ENCODE measurements at regions of chr19 and their contacts with region 1.

Region 1: DNA sequence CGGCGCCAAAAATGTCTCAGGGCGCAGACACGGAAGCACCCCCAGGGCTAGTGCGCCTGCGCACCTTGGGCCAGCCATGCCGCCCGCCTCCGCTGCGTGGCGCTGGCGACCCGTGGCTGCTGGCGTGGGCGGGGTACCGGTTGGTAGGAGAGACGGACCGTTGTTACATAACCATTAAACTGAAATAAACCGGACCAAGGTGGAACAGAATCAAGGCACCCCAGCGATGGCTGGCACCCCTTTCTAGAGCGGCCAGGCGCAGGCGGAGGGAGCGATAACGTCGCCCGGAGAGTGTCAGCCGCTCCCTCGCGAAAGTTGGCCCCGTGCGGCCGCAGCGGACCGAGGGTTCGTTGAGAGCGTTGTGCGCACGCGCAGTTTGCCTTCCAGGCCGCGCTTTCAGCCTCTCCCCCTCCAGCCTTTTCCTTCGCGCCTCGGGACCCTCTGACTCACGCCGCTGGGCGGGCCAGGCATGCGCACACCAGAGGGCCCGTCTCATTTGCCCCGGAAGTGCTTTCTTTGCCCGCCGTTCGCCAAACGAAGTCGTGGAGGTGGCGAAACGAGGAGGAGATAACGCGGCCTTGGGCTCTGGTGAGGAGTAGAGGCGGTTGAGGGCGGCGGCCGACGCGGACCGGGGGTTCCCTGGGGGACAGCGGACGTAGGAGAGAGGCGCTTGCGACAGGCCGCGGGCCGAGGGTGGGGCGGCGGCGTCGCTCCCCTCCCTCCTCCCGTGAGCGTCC is at the starts of genes PLEKHJ1 and SF3A2:
- DNase-seq: peak; percentile 98 to 100 (median 99)
- H3K4me3 ChIP-seq: peak within 1 kb of the TSS; percentile 38 to 88
- H3K4me3 Mint-ChIP-seq: peak within 1 kb of the TSS; percentile 95 to 100 (median 98)
- H3K27ac ChIP-seq: peak within 1 kb of the TSS; percentile 98
- H3K27ac Mint-ChIP-seq: peak within 1 kb of the TSS; percentile 97 to 100 (median 99)
- H3K4me1 ChIP-seq: peaks cover 62% of the 10 kb centered on the region
- H3K4me1 Mint-ChIP-seq: peaks cover 39 to 67% (median 54%) of the 10 kb centered on the region in 4 donors
- H3K27me3 ChIP-seq: no peaks in the 10 kb centered on the region
- H3K27me3 Mint-ChIP-seq: peaks cover 2 to 5% of the 10 kb centered on the region in 2 donors
- total RNA-seq, gene PLEKHJ1: 64.9 to 65.3 TPM
- total RNA-seq, gene SF3A2: 140 to 141 TPM

Region 2: DNA sequence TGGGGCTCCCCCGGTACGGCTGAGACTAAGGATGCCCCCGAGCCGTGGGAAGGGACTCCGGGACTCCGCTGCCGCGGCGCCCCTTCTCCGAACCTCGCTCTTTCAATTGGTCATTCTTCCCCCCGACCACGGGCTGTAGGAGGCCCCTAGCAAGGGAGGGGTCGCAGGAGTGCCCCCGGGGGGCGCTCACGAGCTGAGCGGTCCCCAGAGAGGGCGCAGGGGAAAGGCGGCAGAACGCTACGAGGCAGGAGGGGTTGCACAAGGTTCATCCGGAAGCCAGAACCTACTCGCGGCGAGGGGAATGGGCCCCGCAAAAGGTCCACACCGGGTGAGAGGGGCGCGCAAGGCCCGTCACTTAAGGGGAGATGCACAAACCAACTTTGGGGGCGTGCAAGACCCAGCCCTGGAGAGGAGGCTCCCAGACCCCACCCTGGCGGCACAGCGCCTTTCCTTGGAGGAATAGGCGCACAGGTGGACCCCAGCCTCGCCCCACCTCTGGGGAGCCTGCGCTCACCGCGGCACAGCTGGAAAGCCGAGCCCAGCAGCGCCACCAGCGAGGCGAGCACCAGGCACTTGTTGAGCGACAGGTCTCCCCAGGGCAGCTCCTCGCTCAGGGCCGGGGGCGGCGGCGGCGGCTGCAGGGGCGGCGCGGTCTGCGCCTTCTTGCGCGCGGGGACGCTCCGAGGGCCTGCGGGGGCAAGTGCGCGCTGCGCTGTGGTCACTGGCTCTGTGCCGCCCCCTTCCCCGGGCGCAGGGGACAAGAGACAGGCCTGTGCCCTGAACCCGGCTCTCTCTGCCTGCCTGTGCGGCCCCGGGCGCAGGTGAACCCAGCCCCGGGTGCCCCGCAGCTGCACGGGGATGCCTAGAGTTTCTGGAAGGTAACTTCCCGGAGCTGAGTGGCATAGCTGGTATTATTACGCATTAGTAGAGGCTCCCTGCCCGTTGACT is 16.9 kb after region 1 on chr19:
- CTCF ChIA-PET with region 1: interaction called, 75 read pairs
- POLR2A ChIA-PET with region 1: interaction called, 325 read pairs
- intact Hi-C with region 1: loop called (anchors 1 kb)
- DNase-seq: peak; percentile 55 to 61 (median 57)
- H3K4me3 ChIP-seq: peak overlapping the region in 1 of 2 donors; percentile 52
- H3K4me3 Mint-ChIP-seq: peak overlapping the region; percentile 63 to 84 (median 79)
- H3K27ac ChIP-seq: no peak overlapping the region
- H3K27ac Mint-ChIP-seq: peak overlapping the region in 5 of 7 donors; percentile 23 to 68 (median 43)
- H3K4me1 ChIP-seq: peaks cover 47% of the 10 kb centered on the region
- H3K4me1 Mint-ChIP-seq: peaks cover 5 to 25% (median 15%) of the 10 kb centered on the region in 4 donors
- H3K27me3 ChIP-seq: peaks cover 4% of the 10 kb centered on the region
- H3K27me3 Mint-ChIP-seq: no peaks in the 10 kb centered on the region

Region 3: DNA sequence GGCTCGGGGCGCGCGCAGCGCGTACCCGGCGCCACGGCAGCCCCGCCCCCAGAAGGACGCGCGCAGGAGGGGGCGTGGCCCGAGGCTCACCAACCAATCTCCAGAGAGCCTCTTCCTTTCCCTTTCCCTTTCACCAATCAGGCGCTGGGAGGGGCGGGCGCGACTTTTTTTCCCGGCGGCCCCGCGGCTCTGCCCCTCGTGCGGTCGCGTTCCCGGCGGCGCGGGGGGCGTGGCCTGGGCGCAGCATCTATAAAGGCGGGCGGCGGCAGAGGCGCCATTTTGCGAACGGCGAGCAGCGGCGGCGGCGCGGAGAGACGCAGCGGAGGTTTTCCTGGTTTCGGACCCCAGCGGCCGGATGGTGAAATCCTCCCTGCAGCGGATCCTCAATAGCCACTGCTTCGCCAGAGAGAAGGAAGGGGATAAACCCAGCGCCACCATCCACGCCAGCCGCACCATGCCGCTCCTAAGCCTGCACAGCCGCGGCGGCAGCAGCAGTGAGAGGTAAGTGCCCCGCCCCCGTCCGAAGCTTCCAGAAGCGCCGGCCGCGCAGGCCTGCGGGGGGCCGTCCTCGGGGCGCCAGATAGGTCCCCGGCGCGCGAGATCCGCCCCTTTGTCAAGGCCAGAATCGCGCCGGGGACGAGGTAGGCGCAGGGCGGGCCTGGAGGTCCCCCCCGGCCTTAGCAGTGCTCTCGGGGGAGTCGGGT is 32.9 kb after region 1 on chr19:
- CTCF ChIA-PET with region 1: interaction called, 67 read pairs
- POLR2A ChIA-PET with region 1: interaction called, 251 read pairs
- intact Hi-C with region 1: loop called (anchors 1 kb)
- DNase-seq: peak; percentile 98 to 99 (median 99)
- H3K4me3 ChIP-seq: peak overlapping the region; percentile 52 to 83
- H3K4me3 Mint-ChIP-seq: peak overlapping the region; percentile 88 to 95 (median 94)
- H3K27ac ChIP-seq: peak overlapping the region; percentile 91
- H3K27ac Mint-ChIP-seq: peak overlapping the region; percentile 86 to 99 (median 94)
- H3K4me1 ChIP-seq: peaks cover 52% of the 10 kb centered on the region
- H3K4me1 Mint-ChIP-seq: peaks cover 17 to 48% (median 34%) of the 10 kb centered on the region in 4 donors
- H3K27me3 ChIP-seq: no peaks in the 10 kb centered on the region
- H3K27me3 Mint-ChIP-seq: no peaks in the 10 kb centered on the region

Region 4: DNA sequence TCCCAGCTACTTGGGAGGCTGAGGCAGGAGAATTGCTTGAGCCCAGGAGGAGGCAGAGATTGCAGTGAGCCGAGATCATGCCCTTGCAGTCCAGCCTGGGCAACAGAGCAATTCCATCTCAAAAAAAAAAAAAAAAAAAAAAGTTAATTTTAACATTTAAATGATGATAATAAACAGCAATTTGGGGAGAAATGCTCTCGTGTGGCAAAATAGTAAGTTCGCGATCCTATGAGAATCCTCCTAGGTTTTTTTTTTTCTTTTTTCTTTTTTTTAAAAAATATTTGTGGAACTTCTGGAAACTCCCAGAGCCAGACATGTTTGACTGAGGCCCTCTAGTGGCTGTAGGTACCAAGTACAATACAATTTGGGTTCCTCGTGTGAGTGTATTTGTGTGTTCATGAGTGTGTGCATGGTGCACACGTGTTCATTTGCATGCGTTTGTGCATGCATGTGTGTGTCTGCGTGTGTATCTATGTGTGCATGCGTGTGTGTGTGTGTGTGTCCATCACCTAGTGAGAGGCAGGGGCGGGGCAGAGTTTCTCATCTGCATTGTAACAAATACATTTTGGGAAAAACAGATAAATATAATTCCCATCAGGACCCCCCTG is 154.7 kb after region 1 on chr19:
- CTCF ChIA-PET with region 1: interaction called, 12 read pairs
- POLR2A ChIA-PET with region 1: interaction called, 4 read pairs
- intact Hi-C with region 1: loop called (anchors 1 kb)
- DNase-seq: peak; percentile 50 to 66 (median 51)
- H3K4me3 ChIP-seq: no peak overlapping the region
- H3K4me3 Mint-ChIP-seq: peak overlapping the region in 1 of 8 donors; percentile 78
- H3K27ac ChIP-seq: no peak overlapping the region
- H3K27ac Mint-ChIP-seq: peak overlapping the region in 2 of 7 donors; percentile 53 to 69
- H3K4me1 ChIP-seq: no peaks in the 10 kb centered on the region
- H3K4me1 Mint-ChIP-seq: peaks cover 2 to 15% (median 4%) of the 10 kb centered on the region in 4 donors
- H3K27me3 ChIP-seq: no peaks in the 10 kb centered on the region
- H3K27me3 Mint-ChIP-seq: peaks cover 2% of the 10 kb centered on the region in 2 donors